ENCODE measurements at regions of chr7 and their contacts with region 1.

Region 1: GRCh38 chr7:115984120-115984519 is 46.4 kb downstream of the TFEC start:
- DNase-seq: no peak
- ATAC-seq: no peak
- H3K4me3 ChIP-seq: no peak overlapping the region
- H3K4me3 Mint-ChIP-seq: no peak overlapping the region
- H3K27ac ChIP-seq: no peak overlapping the region
- H3K27ac Mint-ChIP-seq: no peak overlapping the region
- H3K4me1 ChIP-seq: no peaks in the 10 kb centered on the region
- H3K4me1 Mint-ChIP-seq: peaks cover 0 to 1% (median 0%) of the 10 kb centered on the region in 7 donors
- H3K27me3 ChIP-seq: no peaks in the 10 kb centered on the region
- H3K27me3 Mint-ChIP-seq: no peaks in the 10 kb centered on the region

Region 2: GRCh38 chr7:115996911-115997615 is 12.9 kb after region 1 on chr7:
- CTCF ChIA-PET with region 1: no interaction called
- POLR2A ChIA-PET with region 1: no interaction called
- intact Hi-C with region 1: loop called in 1 of 2 experiments (anchors 1 kb)
- DNase-seq: no peak
- ATAC-seq: no peak
- H3K4me3 ChIP-seq: no peak overlapping the region
- H3K4me3 Mint-ChIP-seq: no peak overlapping the region
- H3K27ac ChIP-seq: no peak overlapping the region
- H3K27ac Mint-ChIP-seq: no peak overlapping the region
- H3K4me1 ChIP-seq: no peaks in the 10 kb centered on the region
- H3K4me1 Mint-ChIP-seq: no peaks in the 10 kb centered on the region
- H3K27me3 ChIP-seq: no peaks in the 10 kb centered on the region
- H3K27me3 Mint-ChIP-seq: no peaks in the 10 kb centered on the region